GM12878 (cell line): ENCODE measurements at regions of chr11 and their contacts with region 1.

Region 1: GRCh38 chr11:62081378-62082291 is 42.2 kb upstream of the INCENP start:
- DNase-seq: peak; percentile 8
- ATAC-seq: peak; percentile 85
- H3K4me3 ChIP-seq: peak overlapping the region; percentile 11; the same call in 1 of the 2 replicates
- H3K27ac ChIP-seq: no peak overlapping the region
- H3K4me1 ChIP-seq: peaks cover 5% of the 10 kb centered on the region; the same call in 1 of the 2 replicates
- H3K27me3 ChIP-seq: no peaks in the 10 kb centered on the region
- CTCF ChIP-seq: peak; percentile 89 to 99 (median 89); a peak in 5 of 6 replicates
- EP300 ChIP-seq: no peak
- POLR2A ChIP-seq: no peak
- RAD21 ChIP-seq: peak; percentile 96

Region 2: DNA sequence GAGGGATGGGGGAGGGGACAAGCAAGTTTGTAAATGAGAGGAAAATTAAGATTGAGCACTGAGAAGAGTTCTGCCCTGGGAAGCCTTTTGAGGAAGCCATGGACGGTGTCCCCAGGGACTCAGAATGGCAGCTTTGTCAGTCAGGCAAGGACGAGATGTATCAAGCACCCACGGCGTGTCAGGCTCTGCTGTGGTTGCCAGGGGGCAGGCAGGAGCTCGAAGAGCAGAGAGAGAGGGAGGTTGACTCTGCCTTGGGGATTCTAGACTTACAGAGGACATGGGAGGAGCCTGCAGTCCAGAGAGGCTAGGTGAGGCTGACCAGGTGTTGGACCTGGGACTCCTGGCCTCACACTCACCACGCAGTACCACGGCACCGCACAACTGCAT is 471.7 kb before region 1 on chr11:
- CTCF ChIA-PET with region 1: no interaction called
- POLR2A ChIA-PET with region 1: no interaction called
- RAD21 ChIA-PET with region 1: no interaction called
- SMC1A ChIA-PET with region 1: no interaction called
- in situ Hi-C with region 1: no loop called
- intact Hi-C with region 1: no loop called
- DNase-seq: no peak
- ATAC-seq: peak; percentile 27; the same call in 1 of the 3 replicates
- H3K4me3 ChIP-seq: no peak overlapping the region
- H3K27ac ChIP-seq: no peak overlapping the region
- H3K4me1 ChIP-seq: no peaks in the 10 kb centered on the region
- H3K27me3 ChIP-seq: no peaks in the 10 kb centered on the region; a peak in 2 of 4 replicates
- CTCF ChIP-seq: 0 out of 6 replicates have a peak, but pooled peaks of 1 of the 3 experiments have one; percentile 4
- EP300 ChIP-seq: no peak
- POLR2A ChIP-seq: no peak
- RAD21 ChIP-seq: no peak

Region 3: GRCh38 chr11:61792310-61793085 is 289.1 kb before region 1 on chr11 and contains the starts of genes FEN1 and TMEM258:
- CTCF ChIA-PET with region 1: interaction called, 159 read pairs
- POLR2A ChIA-PET with region 1: interaction called, 7 read pairs
- RAD21 ChIA-PET with region 1: interaction called, 92 read pairs
- SMC1A ChIA-PET with region 1: interaction called, 79 read pairs
- in situ Hi-C with region 1: no loop called
- intact Hi-C with region 1: loop called (anchors 5 kb)
- DNase-seq: peak; percentile 76
- ATAC-seq: peak; percentile 92
- H3K4me3 ChIP-seq: peak within 1 kb of the TSS; percentile 98
- H3K27ac ChIP-seq: peak within 1 kb of the TSS; percentile 100
- H3K4me1 ChIP-seq: no peaks in the 10 kb centered on the region; the same call in 1 of the 2 replicates
- H3K27me3 ChIP-seq: no peaks in the 10 kb centered on the region
- CTCF ChIP-seq: no peak
- EP300 ChIP-seq: no peak
- POLR2A ChIP-seq: peak; percentile 98
- RAD21 ChIP-seq: no peak
- polyA plus RNA-seq, gene FEN1: 54.8 to 99.9 TPM
- polyA plus RNA-seq, gene TMEM258: 800 to 840 TPM

Region 4: DNA sequence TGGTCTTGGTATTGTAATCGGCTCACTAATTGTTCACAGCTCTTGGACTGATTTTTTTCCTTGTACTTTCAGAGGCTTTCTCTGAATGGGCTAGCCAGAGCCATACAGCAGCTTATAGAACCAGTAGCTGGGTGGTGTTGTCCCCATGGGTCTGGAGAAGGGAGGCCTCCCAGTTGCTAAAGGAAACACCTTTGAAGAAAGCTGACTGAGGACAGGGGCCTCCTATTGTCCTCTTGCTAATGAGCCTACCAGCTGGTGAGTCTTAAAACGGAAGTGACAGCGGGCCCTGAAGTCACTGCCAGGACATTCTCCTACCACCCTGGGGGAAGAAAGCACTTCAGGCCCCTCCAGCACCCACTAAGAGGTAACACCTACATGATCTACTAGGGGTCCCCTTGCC is 200.2 kb before region 1 on chr11:
- CTCF ChIA-PET with region 1: interaction called, 7 read pairs
- POLR2A ChIA-PET with region 1: no interaction called
- RAD21 ChIA-PET with region 1: interaction called, 3 read pairs
- SMC1A ChIA-PET with region 1: interaction called, 11 read pairs
- in situ Hi-C with region 1: no loop called
- intact Hi-C with region 1: no loop called
- DNase-seq: no peak
- ATAC-seq: peak; percentile 43
- H3K4me3 ChIP-seq: no peak overlapping the region
- H3K27ac ChIP-seq: no peak overlapping the region
- H3K4me1 ChIP-seq: peaks cover 22% of the 10 kb centered on the region
- H3K27me3 ChIP-seq: no peaks in the 10 kb centered on the region; a peak in 1 of 4 replicates
- CTCF ChIP-seq: no peak
- EP300 ChIP-seq: no peak
- POLR2A ChIP-seq: no peak
- RAD21 ChIP-seq: no peak

Region 5: DNA sequence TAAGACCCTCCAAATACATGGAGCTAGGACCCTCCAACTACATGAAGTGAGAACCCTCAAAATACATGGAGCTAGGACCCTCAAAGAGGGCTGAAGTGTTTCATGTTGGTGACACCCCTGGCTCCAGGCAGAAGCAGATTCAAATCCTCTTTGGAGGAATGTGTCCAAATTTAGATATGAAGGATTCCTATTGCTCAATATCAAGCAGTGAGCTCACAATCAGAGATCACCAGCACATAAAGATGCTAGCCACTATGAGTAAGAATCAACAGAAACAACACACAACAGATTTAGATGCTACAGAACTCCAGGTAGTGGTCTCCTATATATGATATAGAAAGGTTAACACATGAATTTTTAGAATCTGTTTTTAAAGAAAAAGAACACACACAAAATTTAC is 153.0 kb before region 1 on chr11:
- CTCF ChIA-PET with region 1: interaction called, 6 read pairs
- POLR2A ChIA-PET with region 1: no interaction called
- RAD21 ChIA-PET with region 1: interaction called, 3 read pairs
- SMC1A ChIA-PET with region 1: interaction called, 10 read pairs
- in situ Hi-C with region 1: no loop called
- intact Hi-C with region 1: no loop called
- DNase-seq: no peak
- ATAC-seq: no peak
- H3K4me3 ChIP-seq: no peak overlapping the region
- H3K27ac ChIP-seq: no peak overlapping the region
- H3K4me1 ChIP-seq: no peaks in the 10 kb centered on the region
- H3K27me3 ChIP-seq: no peaks in the 10 kb centered on the region; a peak in 2 of 4 replicates
- CTCF ChIP-seq: no peak
- EP300 ChIP-seq: no peak
- POLR2A ChIP-seq: no peak
- RAD21 ChIP-seq: no peak

Region 6: DNA sequence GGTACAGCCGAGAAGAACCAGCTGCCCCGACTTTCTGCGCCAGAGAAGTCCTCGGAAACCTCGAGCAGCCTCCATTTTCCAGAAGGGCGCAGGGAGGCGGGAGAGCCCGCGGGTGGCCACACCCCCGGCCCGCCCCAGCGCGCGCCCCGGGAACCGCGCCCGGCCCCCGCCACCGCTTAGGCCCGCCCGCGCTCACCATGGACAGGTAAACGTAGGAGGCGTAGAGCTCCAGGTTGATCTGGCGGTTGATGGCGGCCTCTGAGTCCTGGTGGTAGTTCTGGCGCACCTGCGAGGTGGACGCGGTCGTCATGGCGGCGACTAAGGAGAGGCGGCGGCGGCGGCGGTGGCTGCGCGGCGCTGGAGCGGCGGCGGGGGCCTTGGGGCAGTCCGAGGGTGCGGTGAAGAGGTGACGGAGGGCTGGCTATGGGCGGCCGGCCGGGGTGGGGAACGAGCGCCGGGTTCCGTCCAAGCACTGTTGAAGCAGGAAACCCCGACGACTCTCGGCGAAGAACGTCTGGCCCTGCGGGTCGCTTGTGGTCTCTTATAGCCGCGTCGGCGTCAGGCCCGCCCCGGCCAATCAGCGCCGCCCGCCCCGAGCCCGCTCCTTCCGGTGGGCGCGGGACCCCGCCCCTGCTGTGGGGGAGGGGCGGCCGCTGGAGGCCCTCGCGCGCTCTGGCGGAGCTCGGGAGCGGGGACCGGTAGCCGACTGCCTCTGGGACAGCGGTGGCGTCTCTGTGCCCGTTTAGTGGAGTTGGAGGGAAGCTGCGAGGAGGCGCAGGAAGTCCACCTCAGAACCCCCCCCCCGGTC is 114.3 kb before region 1 on chr11 and contains the start of gene FTH1:
- CTCF ChIA-PET with region 1: interaction called, 24 read pairs
- POLR2A ChIA-PET with region 1: no interaction called
- RAD21 ChIA-PET with region 1: interaction called, 13 read pairs
- SMC1A ChIA-PET with region 1: interaction called, 29 read pairs
- in situ Hi-C with region 1: no loop called
- intact Hi-C with region 1: no loop called
- DNase-seq: no peak
- ATAC-seq: peak; percentile 72
- H3K4me3 ChIP-seq: peak within 1 kb of the TSS; percentile 100
- H3K27ac ChIP-seq: peak within 1 kb of the TSS; percentile 96
- H3K4me1 ChIP-seq: peaks cover 47% of the 10 kb centered on the region
- H3K27me3 ChIP-seq: no peaks in the 10 kb centered on the region
- CTCF ChIP-seq: no peak
- EP300 ChIP-seq: no peak
- POLR2A ChIP-seq: peak; percentile 79
- RAD21 ChIP-seq: no peak
- polyA plus RNA-seq, gene FTH1: 295 to 816 TPM

Region 7: DNA sequence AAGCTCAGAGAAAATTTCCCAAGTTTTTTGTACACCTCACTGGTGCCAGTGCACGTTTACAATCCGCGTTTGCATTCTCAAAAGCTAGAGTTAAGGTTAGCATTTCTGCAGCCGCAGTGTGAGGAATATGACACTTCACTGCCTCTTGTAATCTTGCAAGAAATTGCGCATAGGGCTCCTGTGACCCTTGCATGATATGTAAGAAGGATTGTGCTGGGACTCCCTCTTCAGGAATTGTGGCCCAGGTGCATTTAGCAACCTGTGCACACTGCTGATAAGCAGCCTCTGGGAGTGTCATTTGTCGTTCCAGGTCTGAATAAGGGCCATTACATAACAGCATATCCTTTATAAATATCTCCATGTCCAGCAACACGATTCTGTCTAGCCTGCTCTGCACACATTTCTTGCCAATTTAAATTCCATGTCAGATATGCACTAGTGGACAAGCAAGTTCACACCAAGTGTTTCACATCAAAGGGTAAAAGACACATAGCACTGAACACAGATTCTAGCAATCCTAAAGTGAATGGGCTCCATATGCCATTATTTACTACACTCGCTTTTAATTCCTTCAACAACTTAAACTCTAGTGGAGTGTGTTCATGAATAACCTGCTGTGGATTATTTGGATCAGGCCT is 27.0 kb before region 1 on chr11:
- CTCF ChIA-PET with region 1: interaction called, 10 read pairs
- POLR2A ChIA-PET with region 1: no interaction called
- RAD21 ChIA-PET with region 1: interaction called, 6 read pairs
- SMC1A ChIA-PET with region 1: interaction called, 3 read pairs
- in situ Hi-C with region 1: no loop called
- intact Hi-C with region 1: no loop called
- DNase-seq: no peak
- ATAC-seq: peak; percentile 51; the same call in 1 of the 3 replicates
- H3K4me3 ChIP-seq: no peak overlapping the region
- H3K27ac ChIP-seq: no peak overlapping the region
- H3K4me1 ChIP-seq: no peaks in the 10 kb centered on the region
- H3K27me3 ChIP-seq: no peaks in the 10 kb centered on the region
- CTCF ChIP-seq: peak; percentile 48 to 69 (median 49); a peak in 5 of 6 replicates
- EP300 ChIP-seq: no peak
- POLR2A ChIP-seq: no peak
- RAD21 ChIP-seq: peak; percentile 56

Region 8: DNA sequence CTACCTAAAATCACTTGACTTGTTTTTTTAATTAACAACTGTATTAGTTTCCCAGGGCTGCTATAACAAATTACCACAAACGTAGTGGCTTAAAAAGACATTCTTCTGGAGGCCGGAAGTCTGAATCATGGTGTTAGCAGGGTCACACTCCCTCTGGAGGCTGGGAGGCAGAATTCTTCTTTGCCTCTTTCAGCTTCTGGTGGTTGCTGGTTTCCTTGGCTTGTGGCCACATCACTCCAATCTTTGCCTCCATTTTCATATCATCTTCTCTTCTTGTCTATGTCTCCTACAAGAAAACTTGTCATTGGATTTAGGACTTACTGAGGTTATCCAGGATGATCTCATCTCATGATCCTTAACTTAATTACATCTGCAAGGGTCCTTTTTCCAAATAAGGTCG is 34.8 kb after region 1 on chr11:
- CTCF ChIA-PET with region 1: interaction called, 12 read pairs
- POLR2A ChIA-PET with region 1: no interaction called
- RAD21 ChIA-PET with region 1: interaction called, 20 read pairs
- SMC1A ChIA-PET with region 1: interaction called, 8 read pairs
- in situ Hi-C with region 1: no loop called
- intact Hi-C with region 1: no loop called
- DNase-seq: no peak
- ATAC-seq: no peak
- H3K4me3 ChIP-seq: no peak overlapping the region
- H3K27ac ChIP-seq: no peak overlapping the region
- H3K4me1 ChIP-seq: no peaks in the 10 kb centered on the region
- H3K27me3 ChIP-seq: no peaks in the 10 kb centered on the region
- CTCF ChIP-seq: no peak
- EP300 ChIP-seq: no peak
- POLR2A ChIP-seq: no peak
- RAD21 ChIP-seq: no peak